ENCODE measurements at regions of chr1 and their contacts with region 1.

Region 1: GRCh38 chr1:90568436-90568835 is 148.7 kb downstream of the BARHL2 start:
- DNase-seq: no peak
- H3K4me3 Mint-ChIP-seq: no peak overlapping the region
- H3K27ac Mint-ChIP-seq: no peak overlapping the region
- H3K4me1 Mint-ChIP-seq: no peaks in the 10 kb centered on the region
- H3K27me3 Mint-ChIP-seq: peaks cover 53% of the 10 kb centered on the region
- CTCF ChIP-seq: no peak

Region 2: DNA sequence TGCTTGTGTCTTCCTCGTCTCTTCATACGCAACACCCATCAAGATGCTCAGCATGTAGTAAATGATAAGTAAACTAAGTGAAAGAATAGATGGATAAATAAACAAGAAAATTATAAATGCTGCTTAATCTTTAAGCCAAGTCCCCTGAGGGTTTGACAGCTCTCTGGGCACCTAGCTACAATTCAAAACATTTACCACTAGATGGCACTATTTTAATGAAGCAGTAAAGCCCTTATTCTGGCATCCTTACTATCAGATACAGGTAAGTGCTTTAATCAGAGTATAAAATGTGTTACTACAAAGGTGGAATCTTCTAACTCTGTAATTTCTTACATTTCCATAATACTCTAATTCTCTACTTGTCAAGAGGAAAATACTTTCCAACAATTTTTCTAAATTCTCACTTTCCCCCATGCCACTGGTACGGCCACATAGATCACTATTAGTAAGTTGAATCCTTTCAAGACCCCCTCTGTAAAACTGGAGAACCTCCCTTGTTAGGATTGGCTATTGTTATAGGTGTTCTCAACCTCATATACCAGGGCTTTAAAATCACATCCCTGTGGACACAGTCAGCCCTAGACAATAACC is 10.9 kb after region 1 on chr1:
- CTCF ChIA-PET with region 1: interaction called, 12 read pairs
- POLR2A ChIA-PET with region 1: interaction called, 3 read pairs
- intact Hi-C with region 1: no loop called
- DNase-seq: peak; percentile 48
- H3K4me3 Mint-ChIP-seq: no peak overlapping the region
- H3K27ac Mint-ChIP-seq: no peak overlapping the region
- H3K4me1 Mint-ChIP-seq: peaks cover 8% of the 10 kb centered on the region
- H3K27me3 Mint-ChIP-seq: no peaks in the 10 kb centered on the region
- CTCF ChIP-seq: peak; percentile 41

Region 3: DNA sequence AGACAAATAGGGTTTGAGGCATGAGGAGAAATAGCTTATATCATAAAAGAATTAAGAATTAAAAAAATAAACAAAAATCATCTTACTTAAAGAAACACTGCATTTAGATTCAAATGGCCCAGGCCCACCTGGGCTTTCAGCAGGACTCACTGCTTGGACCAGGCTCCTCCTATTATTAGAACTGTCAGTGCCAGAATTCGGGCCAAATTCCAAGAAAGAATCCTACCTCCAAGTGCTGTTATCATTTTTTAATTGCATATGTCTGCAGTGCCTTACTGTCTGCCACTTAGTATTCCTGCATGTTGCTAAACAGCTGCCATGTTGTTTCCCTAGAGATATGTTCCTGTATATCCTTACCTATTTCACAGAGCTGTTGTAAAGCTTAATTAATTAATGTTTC is 36.6 kb after region 1 on chr1:
- CTCF ChIA-PET with region 1: no interaction called
- POLR2A ChIA-PET with region 1: no interaction called
- intact Hi-C with region 1: no loop called
- DNase-seq: no peak
- H3K4me3 Mint-ChIP-seq: no peak overlapping the region
- H3K27ac Mint-ChIP-seq: no peak overlapping the region
- H3K4me1 Mint-ChIP-seq: no peaks in the 10 kb centered on the region
- H3K27me3 Mint-ChIP-seq: peaks cover 20% of the 10 kb centered on the region
- CTCF ChIP-seq: no peak